ENCODE measurements at regions of chr6 and their contacts with region 1.

Region 1: GRCh38 chr6:73388800-73389512 is 5.7 kb upstream of the DDX43 start:
- DNase-seq: peak; percentile 5
- H3K4me3 ChIP-seq: peak overlapping the region; percentile 65
- CTCF ChIP-seq: peak; percentile 82

Region 2: DNA sequence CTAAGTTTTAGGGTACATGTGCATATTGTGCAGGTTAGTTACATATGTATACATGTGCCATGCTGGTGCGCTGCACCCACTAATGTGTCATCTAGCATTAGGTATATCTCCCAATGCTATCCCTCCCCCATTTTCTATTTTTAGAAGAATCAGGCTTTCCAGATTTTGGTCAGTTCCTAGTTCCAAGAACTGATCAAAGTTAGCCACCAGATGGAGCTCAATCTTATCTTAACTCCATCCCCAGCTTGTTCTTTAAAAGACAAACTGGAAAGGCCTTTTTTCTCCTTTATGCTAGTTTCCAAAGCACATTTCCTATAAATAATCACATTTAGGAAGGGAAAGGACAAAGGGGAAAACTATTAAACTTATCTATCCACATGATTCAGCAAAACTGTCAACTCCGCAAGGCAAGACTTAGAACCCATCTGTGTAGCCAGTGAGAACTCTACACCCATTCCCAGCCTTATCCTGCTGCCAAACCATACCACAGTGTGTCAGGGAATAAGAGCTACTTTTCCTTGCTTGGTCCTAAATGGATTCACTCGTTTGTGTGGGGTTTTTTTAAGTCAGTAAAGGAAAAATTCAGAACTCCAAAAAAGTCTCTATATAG is 103.2 kb before region 1 on chr6:
- CTCF ChIA-PET with region 1: interaction called, 22 read pairs
- POLR2A ChIA-PET with region 1: no interaction called
- DNase-seq: peak; percentile 9
- H3K4me3 ChIP-seq: no peak overlapping the region
- CTCF ChIP-seq: peak; percentile 42

Region 3: GRCh38 chr6:73377225-73377624 is 11.7 kb before region 1 on chr6:
- CTCF ChIA-PET with region 1: interaction called, 29 read pairs
- POLR2A ChIA-PET with region 1: interaction called, 3 read pairs
- DNase-seq: no peak
- H3K4me3 ChIP-seq: no peak overlapping the region
- CTCF ChIP-seq: no peak

Measured in AG04449 (cell line).